ENCODE measurements at regions of chr16 and their contacts with region 1.

Region 1: GRCh38 chr16:23516366-23517137 is 6.3 kb upstream of the GGA2 start:
- DNase-seq: no peak
- H3K4me3 Mint-ChIP-seq: no peak overlapping the region
- H3K27ac Mint-ChIP-seq: no peak overlapping the region
- H3K4me1 Mint-ChIP-seq: peaks cover 40% of the 10 kb centered on the region
- H3K27me3 Mint-ChIP-seq: no peaks in the 10 kb centered on the region

Region 2: GRCh38 chr16:23504451-23505179 is 11.9 kb before region 1 on chr16:
- CTCF ChIA-PET with region 1: interaction called, 8 read pairs
- POLR2A ChIA-PET with region 1: interaction called, 14 read pairs
- DNase-seq: peak; percentile 92
- H3K4me3 Mint-ChIP-seq: peak overlapping the region; percentile 2
- H3K27ac Mint-ChIP-seq: peak overlapping the region; percentile 71
- H3K4me1 Mint-ChIP-seq: peaks cover 78% of the 10 kb centered on the region
- H3K27me3 Mint-ChIP-seq: no peaks in the 10 kb centered on the region